PC-3 (cell line): ENCODE measurements at regions of chr11 and their contacts with region 1.

Region 1: DNA sequence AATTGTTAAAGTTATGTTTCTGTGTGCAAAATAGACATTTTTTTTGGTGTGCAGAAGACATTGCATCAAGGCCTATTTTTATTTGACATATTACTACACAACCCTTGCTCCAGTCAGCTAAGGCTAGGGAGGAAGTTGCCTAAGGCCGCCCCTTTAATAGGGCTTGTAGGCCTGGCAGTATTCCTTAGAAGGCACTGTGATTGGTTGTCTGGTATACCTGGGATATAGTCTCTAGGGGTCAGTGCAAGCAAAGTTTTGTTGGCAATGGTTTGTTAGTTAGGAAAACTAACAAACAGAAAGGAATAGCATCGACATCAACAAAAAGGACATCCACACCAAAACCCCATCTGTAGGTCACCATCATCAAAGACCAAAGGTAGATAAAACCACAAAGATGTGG is 16.9 kb downstream of the CCDC15 start:
- DNase-seq: peak; percentile 76
- ATAC-seq: peak; percentile 94
- H3K4me3 ChIP-seq: no peak overlapping the region
- H3K27ac ChIP-seq: peak overlapping the region; percentile 65
- H3K4me1 ChIP-seq: peaks cover 28% of the 10 kb centered on the region
- H3K27me3 ChIP-seq: no peaks in the 10 kb centered on the region
- CTCF ChIP-seq: peak; percentile 54

Region 2: GRCh38 chr11:125022551-125022950 is 51.6 kb after region 1 on chr11:
- CTCF ChIA-PET with region 1: no interaction called
- POLR2A ChIA-PET with region 1: no interaction called
- intact Hi-C with region 1: loop called (anchors 1 kb)
- DNase-seq: no peak
- ATAC-seq: peak; percentile 25; the same call in 1 of the 2 replicates
- H3K4me3 ChIP-seq: no peak overlapping the region
- H3K27ac ChIP-seq: no peak overlapping the region
- H3K4me1 ChIP-seq: peaks cover 11% of the 10 kb centered on the region
- H3K27me3 ChIP-seq: no peaks in the 10 kb centered on the region
- CTCF ChIP-seq: no peak

Region 3: DNA sequence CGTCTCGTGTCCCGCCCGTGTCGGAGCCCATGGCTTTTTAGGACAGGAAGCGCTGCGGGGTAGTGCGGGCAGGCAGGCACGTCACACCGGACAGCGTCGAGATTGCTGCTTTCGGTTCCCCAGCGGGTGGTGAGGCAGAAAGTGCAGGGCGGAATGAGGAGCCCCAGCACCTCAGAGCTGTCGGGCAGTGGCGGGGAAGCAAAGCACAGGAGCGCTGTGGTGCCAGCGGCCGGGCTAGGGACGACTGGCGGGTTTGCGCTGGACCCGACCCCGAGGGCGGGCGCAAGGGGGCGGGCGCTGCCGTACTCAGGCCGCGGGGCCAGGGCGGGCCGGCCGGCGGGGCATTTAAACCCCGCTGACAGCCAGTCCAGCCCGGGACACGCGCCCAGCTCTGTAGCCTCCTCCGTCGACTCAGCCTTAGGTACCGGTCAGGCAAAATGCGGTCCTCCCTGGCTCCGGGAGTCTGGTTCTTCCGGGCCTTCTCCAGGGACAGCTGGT is 92.1 kb after region 1 on chr11 and contains the start of gene SLC37A2:
- CTCF ChIA-PET with region 1: no interaction called
- POLR2A ChIA-PET with region 1: no interaction called
- intact Hi-C with region 1: loop called (anchors 5 kb)
- DNase-seq: peak; percentile 73
- ATAC-seq: peak; percentile 91
- H3K4me3 ChIP-seq: peak within 1 kb of the TSS; percentile 87
- H3K27ac ChIP-seq: peak within 1 kb of the TSS; percentile 31
- H3K4me1 ChIP-seq: peaks cover 12% of the 10 kb centered on the region; the same call in 1 of the 2 replicates
- H3K27me3 ChIP-seq: no peaks in the 10 kb centered on the region
- CTCF ChIP-seq: peak; percentile 33; the same call in 1 of the 2 replicates
- total RNA-seq, gene SLC37A2: 9.0 and 10.2 TPM in 2 replicates

Region 4: GRCh38 chr11:125091247-125091876 is 120.4 kb after region 1 on chr11:
- CTCF ChIA-PET with region 1: no interaction called
- POLR2A ChIA-PET with region 1: no interaction called
- intact Hi-C with region 1: loop called (anchors 1 kb)
- DNase-seq: peak; percentile 62
- ATAC-seq: peak; percentile 82
- H3K4me3 ChIP-seq: no peak overlapping the region
- H3K27ac ChIP-seq: no peak overlapping the region
- H3K4me1 ChIP-seq: peaks cover 8% of the 10 kb centered on the region; the same call in 1 of the 2 replicates
- H3K27me3 ChIP-seq: no peaks in the 10 kb centered on the region
- CTCF ChIP-seq: peak; percentile 89

Region 5: GRCh38 chr11:125111343-125112207 is 140.7 kb after region 1 on chr11 and contains the start of gene TMEM218:
- CTCF ChIA-PET with region 1: no interaction called
- POLR2A ChIA-PET with region 1: no interaction called
- intact Hi-C with region 1: loop called (anchors 2 kb)
- DNase-seq: peak; percentile 100
- ATAC-seq: peak; percentile 99
- H3K4me3 ChIP-seq: peak within 1 kb of the TSS; percentile 99
- H3K27ac ChIP-seq: peak within 1 kb of the TSS; percentile 8
- H3K4me1 ChIP-seq: peaks cover 7% of the 10 kb centered on the region
- H3K27me3 ChIP-seq: 0 out of 2 replicates have a peak, but pooled peaks cover 1% of the 10 kb centered on the region
- CTCF ChIP-seq: no peak
- total RNA-seq, gene TMEM218: 33.6 and 37.0 TPM in 2 replicates

Region 6: GRCh38 chr11:125141686-125142535 is 171.0 kb after region 1 on chr11:
- CTCF ChIA-PET with region 1: interaction called, 8 read pairs
- POLR2A ChIA-PET with region 1: no interaction called
- intact Hi-C with region 1: loop called (anchors 2 kb)
- DNase-seq: peak; percentile 63
- ATAC-seq: peak; percentile 93
- H3K4me3 ChIP-seq: no peak overlapping the region
- H3K27ac ChIP-seq: no peak overlapping the region
- H3K4me1 ChIP-seq: peaks cover 3% of the 10 kb centered on the region; the same call in 1 of the 2 replicates
- H3K27me3 ChIP-seq: peaks cover 18% of the 10 kb centered on the region; the same call in 1 of the 2 replicates
- CTCF ChIP-seq: peak; percentile 99